ENCODE measurements at regions of chr10 and their contacts with region 1.

Region 1: GRCh38 chr10:100998991-100999741 is 442 bp upstream of the LZTS2 start:
- DNase-seq: peak; percentile 74 to 84
- ATAC-seq: peak; percentile 40 to 64
- H3K4me3 ChIP-seq: peak overlapping the region; percentile 92
- H3K27ac ChIP-seq: peak overlapping the region; percentile 98
- H3K4me1 ChIP-seq: peaks cover 27% of the 10 kb centered on the region
- CTCF ChIP-seq: peak; percentile 83
- EP300 ChIP-seq: no peak
- POLR2A ChIP-seq: peak; percentile 61
- RAD21 ChIP-seq: peak; percentile 21 to 57; a peak in 4 of 5 replicates

Region 2: GRCh38 chr10:100969187-100970075 is 29.7 kb before region 1 on chr10 and contains the start of gene SEMA4G:
- CTCF ChIA-PET with region 1: interaction called, 33 read pairs
- POLR2A ChIA-PET with region 1: no interaction called
- DNase-seq: peak; percentile 44 to 79
- ATAC-seq: peak; percentile 58 to 88
- H3K4me3 ChIP-seq: peak within 1 kb of the TSS; percentile 84
- H3K27ac ChIP-seq: peak within 1 kb of the TSS; percentile 70 to 88
- H3K4me1 ChIP-seq: peaks cover 34% of the 10 kb centered on the region
- CTCF ChIP-seq: peak; percentile 60
- EP300 ChIP-seq: no peak
- POLR2A ChIP-seq: no peak; the same call in 1 of the 2 replicates
- RAD21 ChIP-seq: peak in 1 of 2 experiments; percentile 23; a peak in 1 of 5 replicates
- polyA plus RNA-seq, gene SEMA4G: 17.4 and 31.1 TPM in 2 replicates

Region 3: DNA sequence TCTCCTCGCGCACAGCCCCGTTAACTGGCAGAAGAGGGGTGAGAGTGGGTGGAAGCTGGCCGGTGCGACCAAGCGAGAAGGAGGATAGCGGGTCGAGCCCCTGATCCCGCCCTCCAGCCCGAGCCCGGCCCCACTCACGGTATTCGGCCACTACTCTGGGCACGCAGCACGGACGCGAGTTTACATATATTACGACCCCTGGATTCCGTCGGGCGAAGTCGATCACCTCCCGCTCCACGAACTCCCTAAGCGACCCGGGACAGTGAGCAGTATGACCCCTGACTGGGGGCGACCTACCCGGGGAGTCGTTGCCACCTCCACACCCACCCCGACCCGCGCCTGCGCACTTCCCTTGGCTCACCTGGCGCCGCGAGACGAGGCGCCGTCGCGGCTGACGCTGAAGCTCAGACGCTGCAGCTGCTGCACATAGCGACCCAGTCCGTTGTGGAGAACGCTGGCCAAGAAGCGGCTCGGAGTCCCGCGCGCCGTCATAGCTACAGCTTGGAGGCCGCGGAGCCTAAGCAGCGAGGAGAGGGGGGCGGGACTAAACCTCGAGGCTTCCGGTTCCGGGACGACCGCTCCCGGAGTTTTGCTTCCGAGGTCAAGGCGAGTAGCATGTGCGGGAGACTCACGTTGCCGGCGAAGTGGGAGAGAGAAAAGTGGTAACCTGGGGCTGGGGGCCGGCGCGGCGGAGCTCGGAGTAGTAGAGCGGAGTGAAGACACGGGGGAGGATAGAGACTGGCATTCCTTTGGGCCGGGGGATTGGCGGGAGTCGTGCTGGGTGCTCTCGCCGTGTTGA is 12.0 kb before region 1 on chr10 and contains the starts of genes MRPL43 and TWNK:
- CTCF ChIA-PET with region 1: interaction called, 308 read pairs
- POLR2A ChIA-PET with region 1: interaction called, 6 read pairs
- DNase-seq: peak; percentile 81 to 91
- ATAC-seq: peak; percentile 93 to 94
- H3K4me3 ChIP-seq: peak within 1 kb of the TSS; percentile 83
- H3K27ac ChIP-seq: peak within 1 kb of the TSS; percentile 96 to 97
- H3K4me1 ChIP-seq: peaks cover 31% of the 10 kb centered on the region
- CTCF ChIP-seq: no peak
- EP300 ChIP-seq: no peak
- POLR2A ChIP-seq: peak; percentile 42
- RAD21 ChIP-seq: no peak
- polyA plus RNA-seq, gene MRPL43: 76.3 and 77.4 TPM in 2 replicates
- polyA plus RNA-seq, gene TWNK: 21.1 and 26.7 TPM in 2 replicates

Region 4: DNA sequence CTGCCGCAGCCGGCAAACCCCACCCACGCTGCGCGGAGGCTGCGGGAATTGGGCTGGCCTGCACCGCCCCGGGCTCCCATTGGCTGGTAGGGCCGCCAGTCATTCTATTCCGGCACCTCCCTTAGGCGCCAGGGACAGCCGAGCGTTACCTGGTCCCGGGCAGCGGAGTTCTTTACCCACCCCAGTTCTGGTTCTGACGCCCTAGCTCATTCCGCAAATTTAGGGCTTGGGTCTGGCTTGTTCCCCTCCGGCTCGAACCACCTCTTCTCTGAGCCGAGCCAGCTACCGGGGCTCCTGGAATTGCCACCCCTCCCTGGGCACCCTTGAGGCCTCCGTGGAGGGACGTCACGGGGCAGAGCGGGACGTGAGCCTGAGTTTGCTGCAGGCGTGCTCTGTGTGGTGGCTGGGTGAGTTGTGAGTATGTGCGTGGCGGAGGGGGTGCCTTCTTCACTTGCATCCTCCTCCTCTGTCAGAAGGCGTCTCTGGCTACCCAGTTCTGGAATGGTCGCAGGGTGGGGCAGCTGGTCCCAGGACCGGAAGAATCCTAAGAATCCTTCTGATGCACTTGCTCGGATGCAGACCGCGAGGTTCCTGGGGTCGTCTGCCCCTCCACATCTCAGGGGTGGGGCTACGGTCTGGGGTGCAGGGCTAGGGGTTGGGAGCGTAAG is 32.1 kb after region 1 on chr10 and contains the starts of genes PDZD7 and SFXN3:
- CTCF ChIA-PET with region 1: interaction called, 145 read pairs
- POLR2A ChIA-PET with region 1: no interaction called
- DNase-seq: peak; percentile 92 to 95
- ATAC-seq: peak; percentile 80 to 93
- H3K4me3 ChIP-seq: peak within 1 kb of the TSS; percentile 77
- H3K27ac ChIP-seq: peak within 1 kb of the TSS; percentile 75 to 92
- H3K4me1 ChIP-seq: peaks cover 27% of the 10 kb centered on the region
- CTCF ChIP-seq: no peak
- EP300 ChIP-seq: no peak
- POLR2A ChIP-seq: peak; percentile 27
- RAD21 ChIP-seq: no peak
- polyA plus RNA-seq, gene PDZD7: 0.20 and 0.21 TPM in 2 replicates
- polyA plus RNA-seq, gene SFXN3: 33.7 and 42.1 TPM in 2 replicates

Region 5: DNA sequence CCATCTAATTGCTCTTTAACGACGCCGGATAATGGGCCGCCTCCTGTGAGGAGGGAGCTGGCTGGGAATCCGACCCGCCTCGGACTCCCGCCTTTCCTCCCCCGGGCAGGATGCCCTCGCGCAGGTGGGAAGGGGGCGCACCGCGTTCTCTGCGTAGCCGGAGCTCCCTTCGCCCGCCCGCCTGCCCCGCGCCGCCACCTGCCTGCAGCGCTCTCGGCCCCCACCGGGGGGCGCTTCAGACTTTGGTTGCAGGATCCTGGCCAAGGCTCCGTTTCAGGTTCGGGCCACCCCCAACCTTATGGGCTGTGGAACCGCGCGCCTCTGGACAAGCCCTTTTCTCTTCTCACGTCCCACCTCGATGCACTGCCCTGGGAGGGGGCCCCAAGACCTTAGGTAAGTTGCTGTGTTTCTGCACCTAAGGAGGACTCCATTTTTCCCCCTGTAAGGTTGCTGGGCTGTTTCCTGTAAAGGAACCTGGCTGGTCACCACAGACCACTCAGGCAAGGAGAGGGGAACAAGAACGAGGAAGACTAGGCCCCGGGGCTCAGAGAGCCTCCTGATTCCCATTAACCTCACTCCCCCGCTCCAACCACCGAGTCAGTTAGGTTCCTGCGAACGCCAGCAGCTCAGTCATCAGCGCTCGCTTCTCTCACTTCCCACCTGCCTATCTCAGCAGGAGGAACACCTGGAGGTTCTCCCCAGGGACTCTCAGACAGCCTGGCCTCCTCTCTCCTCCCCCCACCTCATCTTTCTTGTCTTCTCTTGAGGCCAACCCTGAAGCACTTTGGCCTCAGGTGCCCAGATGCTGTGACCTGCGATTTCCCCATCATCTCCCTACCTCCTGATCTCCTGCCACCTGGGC is 51.3 kb after region 1 on chr10:
- CTCF ChIA-PET with region 1: interaction called, 18 read pairs
- POLR2A ChIA-PET with region 1: no interaction called
- DNase-seq: peak in 1 of 2 experiments; percentile 50
- ATAC-seq: peak; percentile 83 to 93
- H3K4me3 ChIP-seq: peak overlapping the region; percentile 37
- H3K27ac ChIP-seq: peak overlapping the region; percentile 60 to 81; a peak in 5 of 6 replicates
- H3K4me1 ChIP-seq: peaks cover 24% of the 10 kb centered on the region
- CTCF ChIP-seq: peak; percentile 78
- EP300 ChIP-seq: no peak
- POLR2A ChIP-seq: no peak
- RAD21 ChIP-seq: peak; percentile 56 to 70

Region 6: DNA sequence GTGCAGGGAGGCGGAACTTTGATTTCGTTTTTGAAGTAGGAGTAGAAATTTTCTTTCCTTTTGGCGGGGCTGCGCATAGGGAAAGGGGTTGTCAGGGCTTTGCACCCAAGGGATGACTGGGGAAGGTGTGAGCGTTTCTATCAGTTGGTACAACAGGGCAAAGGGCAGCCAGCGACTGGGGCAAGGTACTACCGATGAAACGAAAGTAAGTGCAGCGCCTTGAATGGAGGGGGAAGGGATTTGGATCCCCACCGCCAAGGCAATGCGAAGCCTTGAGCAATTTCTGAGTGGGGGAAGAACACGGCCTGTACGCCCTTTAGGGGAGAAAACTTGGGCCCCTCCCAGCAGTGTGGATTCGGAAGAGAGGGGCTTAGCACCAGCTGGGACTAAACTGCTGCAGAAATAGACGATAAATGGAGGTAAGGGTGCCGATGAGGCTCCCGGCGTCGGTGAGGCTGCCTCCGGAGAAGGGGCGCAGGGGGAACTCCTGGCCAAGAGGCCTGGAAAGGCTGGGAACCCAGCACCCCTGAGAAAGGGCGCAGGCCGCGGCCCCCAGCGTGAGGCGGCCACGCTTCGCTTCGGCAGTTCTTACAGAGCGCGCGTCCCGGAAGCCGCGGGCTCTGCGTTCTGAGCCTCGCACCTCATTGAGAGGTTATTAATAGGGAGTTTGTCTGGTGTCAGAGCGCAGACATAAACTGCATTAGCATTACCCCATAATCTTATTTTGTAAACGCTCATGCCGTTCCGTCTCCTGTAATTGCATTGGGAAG is 121.9 kb after region 1 on chr10:
- CTCF ChIA-PET with region 1: no interaction called
- POLR2A ChIA-PET with region 1: no interaction called
- DNase-seq: no peak
- ATAC-seq: no peak
- H3K4me3 ChIP-seq: no peak overlapping the region
- H3K27ac ChIP-seq: no peak overlapping the region
- H3K4me1 ChIP-seq: no peaks in the 10 kb centered on the region
- CTCF ChIP-seq: no peak
- EP300 ChIP-seq: no peak
- POLR2A ChIP-seq: no peak
- RAD21 ChIP-seq: no peak